Aorta (tissue), 5 donors: ENCODE measurements at regions of chr19 and their contacts with region 1.

Region 1: DNA sequence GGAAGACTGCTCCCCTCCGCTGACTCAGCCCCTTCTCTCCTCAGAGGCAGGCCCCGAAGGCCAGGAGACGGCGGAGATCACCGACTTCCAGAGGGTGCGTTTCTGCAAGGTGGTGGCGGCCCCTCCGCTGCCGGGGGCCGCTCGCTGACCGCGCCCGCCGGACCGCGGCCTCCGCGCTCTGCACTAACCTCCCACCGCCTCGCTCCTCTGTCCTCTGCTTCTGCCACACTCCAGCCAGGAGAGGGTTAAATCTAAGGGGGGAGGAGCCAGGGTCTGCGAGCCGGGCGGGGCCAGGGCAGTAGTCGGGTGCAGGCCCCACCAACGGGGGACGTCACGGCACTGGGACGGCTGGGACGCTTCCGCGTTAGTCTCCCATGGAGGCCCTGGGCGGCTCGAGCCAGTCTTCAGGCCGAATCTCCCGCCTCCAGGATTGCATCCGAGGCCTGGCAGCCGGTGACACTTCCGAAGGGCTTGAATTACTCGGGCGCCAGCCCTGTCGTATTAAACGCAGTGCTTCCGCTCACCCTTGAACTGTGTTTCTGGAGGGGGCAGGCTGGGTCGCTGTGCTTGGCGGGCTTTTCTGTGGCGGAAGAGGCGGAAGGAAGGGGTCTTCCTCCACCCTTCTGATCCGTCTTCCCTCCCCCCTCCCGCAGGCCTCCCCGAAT is 1.2 kb upstream of the INAFM1 start:
- DNase-seq: peak; percentile 97 to 98
- ATAC-seq: peak; percentile 91
- H3K4me3 ChIP-seq: peak overlapping the region; percentile 46 to 72
- H3K27ac ChIP-seq: peak overlapping the region; percentile 87 to 90
- H3K4me1 ChIP-seq: no peaks in the 10 kb centered on the region
- H3K27me3 ChIP-seq: no peaks in the 10 kb centered on the region

Region 2: GRCh38 chr19:47256688-47257443 is 16.6 kb before region 1 on chr19:
- intact Hi-C with region 1: loop called in 1 of 2 experiments (anchors 2 kb)
- DNase-seq: peak; percentile 100
- ATAC-seq: peak; percentile 95
- H3K4me3 ChIP-seq: peak overlapping the region; percentile 31 to 52
- H3K27ac ChIP-seq: peak overlapping the region in 1 of 2 donors; percentile 78
- H3K4me1 ChIP-seq: no peaks in the 10 kb centered on the region
- H3K27me3 ChIP-seq: no peaks in the 10 kb centered on the region

Region 3: DNA sequence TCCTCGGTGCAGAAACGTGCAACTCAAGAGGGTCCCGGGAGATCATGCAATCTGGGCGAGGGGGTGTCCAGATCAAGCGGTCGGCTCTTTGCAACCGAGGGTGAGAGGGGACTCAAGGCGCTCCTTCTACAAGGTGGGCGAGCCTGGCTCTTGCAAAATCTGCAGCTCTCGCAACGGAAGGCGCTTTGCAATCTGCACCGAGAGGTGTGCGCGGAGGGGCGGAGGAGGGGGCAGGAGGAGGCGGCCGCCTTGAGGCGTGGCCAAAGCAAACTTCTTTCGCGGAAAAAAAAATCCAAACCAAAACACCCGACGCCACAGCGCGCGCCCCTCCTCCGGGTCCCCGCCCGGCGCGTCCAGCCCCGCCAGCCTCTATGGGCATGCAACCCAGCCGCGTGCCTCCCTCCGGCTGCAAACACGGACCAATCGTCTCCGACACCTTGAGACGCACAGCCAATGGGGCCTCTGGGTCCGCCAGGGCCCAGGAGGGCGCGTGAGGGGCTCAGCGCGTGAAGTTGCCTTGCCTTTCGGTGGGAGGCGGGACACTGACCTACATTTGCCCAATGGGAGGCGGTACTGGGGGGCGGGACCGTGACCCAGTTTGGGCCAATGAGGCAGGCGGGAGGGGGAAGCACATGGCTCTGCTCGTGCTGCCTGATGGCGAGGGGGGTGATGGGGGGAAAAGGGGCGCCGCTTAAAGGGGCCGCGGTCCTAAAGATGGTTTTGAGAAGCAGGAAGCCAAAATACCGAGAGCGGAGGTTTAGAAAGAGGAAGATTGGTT is 1363.9 kb after region 1 on chr19 and contains the start of gene DBP:
- intact Hi-C with region 1: loop called in 1 of 2 experiments (anchors 10 kb)
- DNase-seq: peak; percentile 99 to 100
- ATAC-seq: peak; percentile 92
- H3K4me3 ChIP-seq: peak within 1 kb of the TSS; percentile 34 to 81
- H3K27ac ChIP-seq: peak within 1 kb of the TSS; percentile 83 to 93
- H3K4me1 ChIP-seq: no peaks in the 10 kb centered on the region
- H3K27me3 ChIP-seq: no peaks in the 10 kb centered on the region
- total RNA-seq, gene DBP: 1.5 to 10.7 TPM